ENCODE measurements at regions of chr4 and their contacts with region 1.

Region 1: DNA sequence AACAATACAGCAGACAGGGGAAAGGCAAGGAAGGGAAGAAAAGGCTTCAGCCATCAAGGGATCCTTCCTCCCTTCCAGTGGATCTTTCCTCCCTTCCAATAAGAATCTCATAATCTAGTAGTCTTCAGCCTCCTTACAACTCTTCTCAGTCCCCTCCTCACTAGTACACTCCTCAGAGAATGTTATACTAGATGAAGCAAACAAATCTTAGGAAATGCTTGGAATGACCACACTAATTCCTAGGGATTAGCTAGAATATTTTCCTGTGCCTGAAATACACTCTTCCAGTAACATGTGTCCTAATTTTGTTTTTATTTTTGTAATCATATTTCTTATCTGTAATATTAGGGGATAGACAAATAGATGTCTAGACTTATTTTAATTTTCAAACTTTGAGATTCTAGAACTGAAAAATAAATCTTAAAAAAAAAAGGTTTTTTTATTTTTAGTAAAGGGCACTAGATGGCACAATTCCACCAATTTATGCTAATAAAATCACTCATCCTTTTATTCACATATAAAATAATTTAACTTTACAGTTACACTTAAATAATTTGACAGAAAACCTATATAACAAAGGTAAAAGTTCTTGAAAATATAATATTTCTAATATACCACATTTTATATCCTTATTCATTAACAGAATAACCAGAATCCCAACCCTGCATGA is 7.0 kb upstream of the STPG2 start:
- DNase-seq: peak; percentile 20
- H3K4me3 Mint-ChIP-seq: no peak overlapping the region
- H3K27ac Mint-ChIP-seq: no peak overlapping the region
- H3K4me1 Mint-ChIP-seq: no peaks in the 10 kb centered on the region
- H3K27me3 Mint-ChIP-seq: no peaks in the 10 kb centered on the region
- CTCF ChIP-seq: peak; percentile 30

Region 2: DNA sequence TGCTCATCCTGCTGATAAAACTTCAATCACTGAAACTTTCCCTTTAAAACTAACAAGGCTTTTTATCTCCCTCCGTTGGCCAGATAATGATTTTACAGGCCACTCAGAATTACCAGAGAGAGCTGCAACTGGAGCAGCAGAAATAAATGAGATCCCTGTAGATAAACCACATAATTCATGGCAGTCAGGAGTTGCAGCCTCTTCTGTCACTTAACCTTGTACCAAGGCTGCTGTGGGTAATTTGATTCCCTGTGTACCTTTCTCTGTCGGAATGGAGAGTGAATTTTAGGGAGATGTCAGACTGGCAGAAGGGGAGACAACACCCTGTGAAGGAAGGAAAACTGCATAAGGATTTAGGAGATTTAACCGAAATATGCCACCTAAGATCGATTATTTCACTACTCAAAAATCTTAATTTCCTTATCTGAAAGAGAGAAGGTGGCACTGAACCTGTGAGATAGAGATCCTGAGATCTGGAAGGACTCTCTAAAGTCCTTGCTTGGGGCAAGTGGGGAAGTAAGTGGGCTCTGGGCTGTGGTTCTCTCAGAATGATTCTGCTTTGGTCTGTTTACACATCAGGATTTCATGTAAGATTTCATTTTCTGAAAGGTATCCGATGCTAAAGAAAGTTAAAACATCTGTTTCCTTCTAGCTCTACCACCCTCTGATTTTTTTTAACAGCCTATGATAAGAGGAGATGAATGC is 522.5 kb after region 1 on chr4:
- CTCF ChIA-PET with region 1: no interaction called
- POLR2A ChIA-PET with region 1: no interaction called
- intact Hi-C with region 1: loop called (anchors 5 kb)
- DNase-seq: no peak
- H3K4me3 Mint-ChIP-seq: no peak overlapping the region
- H3K27ac Mint-ChIP-seq: no peak overlapping the region
- H3K4me1 Mint-ChIP-seq: no peaks in the 10 kb centered on the region
- H3K27me3 Mint-ChIP-seq: peaks cover 11% of the 10 kb centered on the region
- CTCF ChIP-seq: no peak

Measured in MCF 10A (cell line).